ENCODE measurements at regions of chr10 and their contacts with region 1.

Region 1: GRCh38 chr10:2263561-2263960 is 526.2 kb upstream of the ADARB2 start:
- DNase-seq: no peak
- ATAC-seq: no peak
- H3K4me3 ChIP-seq: no peak overlapping the region
- H3K27ac ChIP-seq: no peak overlapping the region
- H3K4me1 ChIP-seq: no peaks in the 10 kb centered on the region
- H3K27me3 ChIP-seq: no peaks in the 10 kb centered on the region
- CTCF ChIP-seq: no peak

Region 2: DNA sequence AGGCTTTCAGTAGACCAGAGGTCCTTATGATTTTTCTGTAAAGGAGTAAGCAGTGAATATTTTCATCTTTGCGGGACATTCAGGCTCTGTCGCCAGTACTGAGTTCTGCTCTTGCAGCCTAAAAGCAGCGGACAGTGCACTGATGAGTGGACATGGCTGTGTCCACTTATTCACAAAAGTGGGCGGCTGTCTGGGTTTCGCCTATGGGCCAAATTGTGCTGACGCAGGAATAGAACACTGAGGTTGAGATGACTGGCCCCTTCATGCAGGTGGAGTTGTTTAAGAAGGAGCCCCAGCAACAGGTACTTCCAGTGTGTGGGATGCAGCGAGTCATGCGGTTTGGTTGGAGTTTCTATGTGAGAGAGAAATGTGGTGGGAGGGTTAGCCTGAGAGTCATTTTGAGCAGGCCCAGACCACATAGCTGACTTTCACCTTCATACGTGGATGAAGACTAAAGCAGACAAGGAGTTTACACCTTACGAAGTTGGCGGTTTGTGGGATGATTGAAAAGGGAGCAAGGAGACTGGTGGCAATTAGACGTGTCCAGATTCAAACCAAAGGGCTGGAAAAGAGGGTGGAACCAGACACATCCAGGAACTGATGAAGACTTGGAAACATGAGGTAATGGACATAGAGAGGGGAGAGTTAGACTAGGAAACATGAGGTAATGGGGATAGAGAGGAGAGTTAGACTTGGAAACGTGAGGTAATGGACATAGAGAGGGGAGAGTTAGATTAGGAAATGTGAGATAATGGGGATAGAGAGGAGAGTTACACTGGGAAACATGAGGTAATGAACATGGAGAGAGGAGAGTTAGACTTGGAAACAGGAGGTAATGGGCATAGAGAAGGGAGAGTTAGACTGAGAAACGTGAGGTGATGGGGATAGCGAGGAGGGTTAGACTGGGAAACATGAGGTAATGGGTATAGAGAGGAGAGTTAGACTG is 1169.2 kb before region 1 on chr10:
- CTCF ChIA-PET with region 1: no interaction called
- POLR2A ChIA-PET with region 1: no interaction called
- in situ Hi-C with region 1: no loop called
- intact Hi-C with region 1: no loop called
- DNase-seq: no peak
- ATAC-seq: no peak
- H3K4me3 ChIP-seq: no peak overlapping the region
- H3K27ac ChIP-seq: no peak overlapping the region
- H3K4me1 ChIP-seq: no peaks in the 10 kb centered on the region
- H3K27me3 ChIP-seq: no peaks in the 10 kb centered on the region
- CTCF ChIP-seq: no peak

Region 3: GRCh38 chr10:2232479-2232878 is 31.1 kb before region 1 on chr10:
- CTCF ChIA-PET with region 1: no interaction called
- POLR2A ChIA-PET with region 1: interaction called, 11 read pairs
- in situ Hi-C with region 1: no loop called
- intact Hi-C with region 1: no loop called
- DNase-seq: no peak
- ATAC-seq: no peak
- H3K4me3 ChIP-seq: no peak overlapping the region
- H3K27ac ChIP-seq: no peak overlapping the region
- H3K4me1 ChIP-seq: no peaks in the 10 kb centered on the region
- H3K27me3 ChIP-seq: no peaks in the 10 kb centered on the region
- CTCF ChIP-seq: no peak